Right ventricle myocardium inferior (tissue), 1 donor: ENCODE measurements at regions of chrX and their contacts with region 1.

Region 1: GRCh38 chrX:134753718-134754008 is 95.4 kb upstream of the PLAC1 start:
- DNase-seq: no peak
- ATAC-seq: no peak

Region 2: GRCh38 chrX:134444712-134445111 is 309.0 kb before region 1 on chrX:
- intact Hi-C with region 1: no loop called
- DNase-seq: no peak
- ATAC-seq: no peak

Region 3: DNA sequence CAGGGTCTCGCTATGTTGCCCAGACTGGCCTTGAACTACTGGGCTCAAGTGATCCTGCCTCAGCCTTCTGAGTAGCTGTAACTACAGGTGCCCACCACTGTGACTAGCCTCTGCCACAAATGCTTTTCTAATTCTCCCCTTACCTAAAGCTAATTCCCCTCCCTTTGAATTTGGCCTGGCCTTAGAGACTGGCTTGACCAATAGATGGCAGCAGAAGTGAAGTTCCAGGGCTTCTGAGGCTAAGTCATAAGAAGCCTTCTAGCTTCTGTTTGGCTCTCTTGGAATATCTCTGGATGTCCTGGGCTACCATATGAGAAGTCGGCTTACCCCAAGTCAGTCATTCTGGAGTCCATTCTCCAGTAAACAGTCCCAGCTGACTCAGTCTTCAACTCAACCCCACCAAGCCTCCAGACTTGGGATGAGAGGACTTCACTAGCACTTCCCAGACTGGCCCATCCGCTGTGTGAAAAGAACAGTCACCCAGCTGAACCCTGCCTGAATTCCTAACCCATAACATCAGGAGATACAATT is 232.7 kb before region 1 on chrX:
- intact Hi-C with region 1: loop called (anchors 2 kb)
- DNase-seq: no peak
- ATAC-seq: peak; percentile 60